CD4-positive, alpha-beta memory T cell (primary cell): ENCODE measurements at regions of chr7 and their contacts with region 1.

Region 1: GRCh38 chr7:139500770-139501138 is 17.3 kb upstream of the KLRG2 start:
- DNase-seq: no peak
- H3K4me3 ChIP-seq: no peak overlapping the region
- H3K4me3 Mint-ChIP-seq: peak overlapping the region in 4 of 8 donors; percentile 55 to 94 (median 90)
- H3K27ac ChIP-seq: no peak overlapping the region
- H3K27ac Mint-ChIP-seq: no peak overlapping the region
- H3K4me1 ChIP-seq: no peaks in the 10 kb centered on the region
- H3K4me1 Mint-ChIP-seq: peaks cover 2 to 11% (median 5%) of the 10 kb centered on the region in 4 donors
- H3K27me3 ChIP-seq: no peaks in the 10 kb centered on the region
- H3K27me3 Mint-ChIP-seq: peaks cover 0 to 5% of the 10 kb centered on the region in 2 donors

Region 2: GRCh38 chr7:139490133-139490532 is 10.6 kb before region 1 on chr7:
- CTCF ChIA-PET with region 1: interaction called, 26 read pairs
- POLR2A ChIA-PET with region 1: no interaction called
- intact Hi-C with region 1: no loop called
- DNase-seq: no peak
- H3K4me3 ChIP-seq: no peak overlapping the region
- H3K4me3 Mint-ChIP-seq: no peak overlapping the region
- H3K27ac ChIP-seq: no peak overlapping the region
- H3K27ac Mint-ChIP-seq: peak overlapping the region in 1 of 7 donors; percentile 13
- H3K4me1 ChIP-seq: peaks cover 2% of the 10 kb centered on the region
- H3K4me1 Mint-ChIP-seq: peaks cover 0 to under 1% (median 0%) of the 10 kb centered on the region in 4 donors
- H3K27me3 ChIP-seq: no peaks in the 10 kb centered on the region
- H3K27me3 Mint-ChIP-seq: peaks cover 7% of the 10 kb centered on the region in 2 donors